Activated CD4-positive, alpha-beta T cell treated with anti-CD3 and anti-CD28 coated beads for 36 hours (primary cell): ENCODE measurements at regions of chr22 and their contacts with region 1.

Region 1: DNA sequence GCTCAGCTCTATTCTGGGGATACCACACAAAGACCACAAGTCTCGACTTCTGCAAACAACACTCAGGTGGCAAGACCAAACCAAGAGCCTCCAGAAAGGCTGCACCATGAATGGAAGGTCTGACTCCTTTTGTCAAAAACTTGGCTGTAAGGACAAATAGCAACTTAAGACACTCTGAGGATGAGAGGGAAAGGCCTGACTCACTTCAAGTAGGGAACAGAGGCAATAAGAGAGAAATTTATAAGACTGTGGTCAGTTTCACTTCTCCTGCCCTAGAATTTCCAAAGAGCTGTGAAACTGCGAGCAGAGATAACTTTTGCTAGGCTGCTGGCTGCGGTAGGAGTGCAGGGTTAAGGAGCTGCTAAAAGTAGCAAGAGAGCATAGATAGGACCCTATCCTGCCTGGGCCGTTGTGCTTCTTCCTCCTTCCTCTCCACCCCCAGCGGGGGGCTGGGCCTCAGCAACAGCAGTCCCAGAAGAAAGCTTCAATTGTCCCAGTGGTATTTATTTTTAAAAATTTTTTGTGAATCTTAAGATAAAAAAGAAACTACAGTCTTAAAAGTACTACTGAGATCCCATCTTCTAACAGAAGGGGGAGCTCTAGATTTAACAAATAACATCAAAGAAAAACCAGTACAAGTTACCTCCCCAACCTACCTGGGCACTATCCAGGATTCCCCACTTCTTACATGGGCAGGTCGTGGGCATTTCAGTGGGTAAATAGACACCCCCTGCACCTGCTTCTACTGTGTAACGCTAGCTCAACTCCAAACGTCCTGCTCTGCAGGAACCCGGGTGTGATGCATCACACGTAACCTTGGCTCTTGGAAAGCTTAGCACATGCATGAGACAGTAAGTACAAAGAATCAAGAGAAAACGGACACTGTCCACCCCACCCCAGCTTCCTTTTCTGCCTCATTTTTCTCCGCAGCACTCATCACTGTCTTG is 66.4 kb downstream of the SGSM3 start:
- DNase-seq: peak; percentile 26
- ATAC-seq: peak; percentile 66
- H3K4me3 Mint-ChIP-seq: no peak overlapping the region
- H3K27ac Mint-ChIP-seq: peak overlapping the region; percentile 51
- H3K4me1 Mint-ChIP-seq: peaks cover 56% of the 10 kb centered on the region
- H3K27me3 Mint-ChIP-seq: no peaks in the 10 kb centered on the region

Region 2: DNA sequence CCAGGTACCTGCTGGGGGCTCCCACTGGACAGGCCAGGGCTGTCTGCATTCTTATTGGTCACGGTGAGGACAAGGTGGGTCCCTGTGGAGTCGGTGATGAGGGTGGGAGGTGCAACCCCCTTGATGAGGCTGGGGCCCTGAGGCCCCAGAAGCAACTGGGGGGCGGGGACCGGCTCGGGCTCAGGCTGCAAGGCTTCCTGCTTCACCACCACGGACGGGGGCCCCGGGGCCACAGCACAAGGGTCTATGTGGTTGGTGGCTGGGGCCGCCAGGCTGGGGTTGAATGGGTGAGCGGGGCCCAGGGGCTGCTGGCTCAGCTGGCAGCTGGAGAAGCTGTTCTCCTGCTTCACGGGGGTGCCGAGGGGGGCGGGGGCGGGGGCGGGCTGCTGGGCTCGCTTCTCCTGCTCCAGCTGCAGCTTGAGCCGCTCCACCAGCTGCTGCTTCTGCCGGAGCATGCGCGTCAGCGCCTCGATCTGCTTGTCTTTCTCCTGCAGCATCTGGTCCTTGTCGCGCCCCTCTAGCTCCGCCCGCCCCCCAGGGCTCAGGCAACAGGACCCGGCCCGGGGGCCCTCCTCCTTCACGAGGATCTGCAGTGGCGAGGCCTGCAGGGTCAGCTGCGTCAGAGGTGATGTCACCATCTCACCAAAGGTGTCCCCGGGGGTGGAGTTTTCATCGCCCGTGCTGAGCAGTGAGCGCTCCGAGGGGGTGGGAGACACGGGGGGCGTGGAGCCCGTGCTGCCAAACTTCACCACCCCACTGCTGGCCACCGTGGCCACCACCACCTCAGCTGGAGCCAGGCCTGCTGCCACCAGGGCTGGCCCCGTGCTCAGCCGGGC is 18.2 kb before region 1 on chr22:
- CTCF ChIA-PET with region 1: interaction called, 16 read pairs
- POLR2A ChIA-PET with region 1: no interaction called
- intact Hi-C with region 1: no loop called
- DNase-seq: no peak
- ATAC-seq: no peak
- H3K4me3 Mint-ChIP-seq: no peak overlapping the region
- H3K27ac Mint-ChIP-seq: no peak overlapping the region
- H3K4me1 Mint-ChIP-seq: peaks cover 16% of the 10 kb centered on the region
- H3K27me3 Mint-ChIP-seq: no peaks in the 10 kb centered on the region

Region 3: DNA sequence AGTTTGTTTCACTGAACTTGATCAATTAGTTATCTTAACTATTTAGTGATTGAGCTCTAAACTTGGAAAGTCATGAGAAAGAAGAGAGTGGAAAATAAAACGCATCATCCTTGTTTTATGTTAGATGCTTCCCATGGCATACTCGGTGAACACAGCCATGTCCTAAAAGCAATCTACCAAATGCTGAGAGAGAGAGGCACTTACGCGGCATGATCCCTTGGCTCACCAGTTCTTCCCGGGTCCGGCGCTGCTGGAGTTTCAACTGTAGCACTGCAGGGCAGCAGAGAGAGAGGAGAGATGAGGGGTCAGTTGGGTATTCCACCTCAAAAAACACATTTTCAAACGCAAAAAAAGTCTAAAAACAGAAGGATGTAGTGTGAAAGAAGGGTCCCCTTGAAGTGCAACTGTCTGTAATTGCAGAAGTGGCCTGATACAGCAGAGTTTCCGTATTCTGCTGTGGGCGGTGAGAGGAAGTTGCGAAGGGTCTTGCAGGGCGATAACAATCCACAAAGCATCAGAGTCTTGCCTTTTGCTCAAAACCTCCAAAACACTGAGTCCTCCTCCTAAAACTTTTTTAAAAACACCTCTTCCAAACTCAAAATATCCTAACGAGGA is 26.3 kb after region 1 on chr22:
- CTCF ChIA-PET with region 1: interaction called, 19 read pairs
- POLR2A ChIA-PET with region 1: interaction called, 3 read pairs
- intact Hi-C with region 1: loop called in 1 of 2 experiments (anchors 1 kb)
- DNase-seq: peak; percentile 74
- ATAC-seq: peak; percentile 84
- H3K4me3 Mint-ChIP-seq: peak overlapping the region; percentile 87
- H3K27ac Mint-ChIP-seq: peak overlapping the region; percentile 91
- H3K4me1 Mint-ChIP-seq: peaks cover 65% of the 10 kb centered on the region
- H3K27me3 Mint-ChIP-seq: no peaks in the 10 kb centered on the region

Region 4: GRCh38 chr22:40487663-40488249 is 51.0 kb after region 1 on chr22:
- CTCF ChIA-PET with region 1: interaction called, 64 read pairs
- POLR2A ChIA-PET with region 1: no interaction called
- intact Hi-C with region 1: loop called (anchors 1 kb)
- DNase-seq: no peak
- ATAC-seq: peak; percentile 64
- H3K4me3 Mint-ChIP-seq: no peak overlapping the region
- H3K27ac Mint-ChIP-seq: no peak overlapping the region
- H3K4me1 Mint-ChIP-seq: peaks cover 45% of the 10 kb centered on the region
- H3K27me3 Mint-ChIP-seq: no peaks in the 10 kb centered on the region

Region 5: DNA sequence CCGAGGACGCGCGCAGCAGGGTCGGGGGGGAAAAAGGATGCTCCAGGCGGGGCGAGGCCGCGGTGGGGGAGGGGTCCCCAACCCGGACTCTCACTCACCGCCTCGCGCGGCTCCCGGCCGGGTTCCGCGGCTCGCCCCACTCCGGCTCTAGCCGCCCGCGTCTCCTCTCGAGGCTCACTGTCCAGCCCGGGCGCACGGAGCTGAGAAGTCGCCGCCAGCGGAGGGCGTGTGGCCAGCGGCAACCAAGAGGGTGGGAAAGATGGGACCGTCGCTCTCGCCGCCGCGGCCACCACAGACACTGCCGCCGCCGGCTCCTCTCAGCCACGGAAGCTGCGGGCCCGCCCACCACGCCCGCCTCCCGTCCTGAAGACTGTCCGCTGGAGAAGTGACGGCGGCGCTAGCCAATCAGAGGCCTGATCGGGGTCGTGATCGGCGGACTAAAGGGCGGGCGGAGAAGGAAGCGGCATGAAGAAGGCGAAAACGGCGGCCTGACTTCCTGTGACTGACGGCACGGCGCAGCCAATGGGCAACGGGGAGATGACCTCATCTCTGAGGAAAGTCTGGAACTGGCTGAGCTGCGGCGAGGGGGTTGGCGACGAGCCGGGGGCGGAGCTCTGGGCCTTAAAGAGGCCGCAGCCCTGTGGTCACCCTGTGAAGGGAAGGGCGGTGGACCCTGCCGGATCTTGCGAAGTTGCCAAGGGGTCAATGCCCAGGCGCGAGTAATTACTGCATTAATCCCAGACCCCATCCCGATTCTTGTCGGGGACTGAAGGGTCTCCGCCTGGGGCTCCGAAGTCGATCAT is 199.8 kb after region 1 on chr22 and contains the start of gene MRTFA:
- CTCF ChIA-PET with region 1: interaction called, 79 read pairs
- POLR2A ChIA-PET with region 1: no interaction called
- intact Hi-C with region 1: no loop called
- DNase-seq: peak; percentile 100
- ATAC-seq: peak; percentile 96
- H3K4me3 Mint-ChIP-seq: peak within 1 kb of the TSS; percentile 85
- H3K27ac Mint-ChIP-seq: peak within 1 kb of the TSS; percentile 93
- H3K4me1 Mint-ChIP-seq: peaks cover 43% of the 10 kb centered on the region
- H3K27me3 Mint-ChIP-seq: no peaks in the 10 kb centered on the region
- total RNA-seq, gene MRTFA: 41.0 to 43.2 TPM

Region 6: DNA sequence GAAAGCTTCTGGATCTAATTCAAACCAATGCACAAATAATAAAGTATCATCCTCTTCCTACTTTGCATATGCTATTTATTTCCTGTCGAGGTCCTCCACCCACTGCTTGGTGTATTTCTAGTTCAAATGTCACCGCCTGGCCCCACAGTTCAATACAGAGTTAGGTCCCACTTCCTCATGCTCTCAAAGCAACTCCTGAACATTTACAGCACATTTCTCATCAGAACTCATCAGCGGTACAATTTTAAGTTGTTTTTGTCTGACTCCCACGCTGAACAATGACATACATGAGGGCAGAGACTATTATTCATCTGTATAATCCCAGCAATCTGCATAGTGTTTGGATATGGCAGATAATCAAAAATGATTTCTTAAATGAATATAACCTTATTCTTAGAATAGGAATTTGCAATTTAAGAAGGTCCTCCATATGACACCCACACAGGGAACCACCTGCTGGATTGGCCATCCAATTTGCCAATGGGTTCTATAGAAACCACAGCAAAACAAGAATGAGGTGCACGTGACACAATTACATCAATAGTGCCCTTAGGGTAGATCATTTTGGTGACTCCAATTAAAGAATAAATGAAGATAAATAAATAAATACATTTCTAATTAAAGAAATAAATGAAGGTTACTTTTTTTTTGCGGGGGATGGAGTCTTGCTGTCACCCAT is 328.1 kb after region 1 on chr22:
- CTCF ChIA-PET with region 1: interaction called, 7 read pairs
- POLR2A ChIA-PET with region 1: no interaction called
- intact Hi-C with region 1: loop called in 1 of 2 experiments (anchors 5 kb)
- DNase-seq: peak; percentile 32
- ATAC-seq: peak; percentile 61
- H3K4me3 Mint-ChIP-seq: no peak overlapping the region
- H3K27ac Mint-ChIP-seq: peak overlapping the region; percentile 84
- H3K4me1 Mint-ChIP-seq: peaks cover 23% of the 10 kb centered on the region
- H3K27me3 Mint-ChIP-seq: no peaks in the 10 kb centered on the region

Region 7: GRCh38 chr22:41146573-41146972 is 709.8 kb after region 1 on chr22:
- CTCF ChIA-PET with region 1: no interaction called
- POLR2A ChIA-PET with region 1: no interaction called
- intact Hi-C with region 1: no loop called
- DNase-seq: peak; percentile 11
- ATAC-seq: no peak
- H3K4me3 Mint-ChIP-seq: no peak overlapping the region
- H3K27ac Mint-ChIP-seq: no peak overlapping the region
- H3K4me1 Mint-ChIP-seq: no peaks in the 10 kb centered on the region
- H3K27me3 Mint-ChIP-seq: no peaks in the 10 kb centered on the region